Aorta (tissue), 5 donors: ENCODE measurements at regions of chr3 and their contacts with region 1.

Region 1: DNA sequence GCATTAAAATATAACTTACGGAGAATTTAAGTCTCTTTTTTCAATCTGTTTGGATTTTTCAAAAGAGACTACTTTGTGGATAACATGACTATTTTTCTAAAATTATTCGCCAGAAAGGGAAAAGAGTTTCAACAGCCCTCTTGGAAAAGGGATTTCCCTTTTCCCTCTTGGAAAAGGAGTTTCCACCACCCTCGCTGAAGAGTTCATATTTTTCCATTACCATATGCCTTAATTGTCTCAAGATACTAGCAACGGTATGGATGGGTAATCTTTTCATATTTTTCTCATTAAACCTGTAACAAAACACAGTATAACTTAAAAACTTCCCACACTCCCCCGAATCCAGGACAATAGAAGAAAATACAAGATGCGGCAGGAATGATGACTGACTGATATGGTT is 66.1 kb upstream of the SPATA12 start:
- DNase-seq: no peak
- ATAC-seq: no peak
- H3K4me3 ChIP-seq: no peak overlapping the region
- H3K27ac ChIP-seq: no peak overlapping the region
- H3K4me1 ChIP-seq: no peaks in the 10 kb centered on the region
- H3K27me3 ChIP-seq: no peaks in the 10 kb centered on the region

Region 2: GRCh38 chr3:56878074-56878473 is 116.3 kb before region 1 on chr3:
- intact Hi-C with region 1: no loop called
- DNase-seq: no peak
- ATAC-seq: no peak
- H3K4me3 ChIP-seq: no peak overlapping the region
- H3K27ac ChIP-seq: no peak overlapping the region
- H3K4me1 ChIP-seq: peaks cover 0 to 2% of the 10 kb centered on the region in 2 donors
- H3K27me3 ChIP-seq: no peaks in the 10 kb centered on the region

Region 3: DNA sequence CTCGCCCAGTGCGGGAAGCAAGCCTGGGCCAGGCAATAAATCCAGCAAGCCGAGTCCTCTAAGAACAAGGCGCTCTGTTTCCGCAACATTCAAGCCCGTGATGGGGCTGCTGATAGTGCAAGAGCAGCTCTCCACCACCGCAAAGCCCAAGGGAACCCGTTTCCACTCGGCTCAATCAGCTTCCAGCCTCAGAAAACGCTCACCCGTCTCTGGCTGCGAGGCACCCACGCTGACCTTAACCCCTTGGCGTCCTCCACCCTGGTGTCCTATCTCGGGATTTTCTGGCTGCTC is 83.9 kb after region 1 on chr3:
- intact Hi-C with region 1: loop called in 1 of 2 experiments (anchors 2 kb)
- DNase-seq: peak; percentile 76 to 83
- ATAC-seq: peak; percentile 43
- H3K4me3 ChIP-seq: peak overlapping the region; percentile 20 to 57
- H3K27ac ChIP-seq: no peak overlapping the region
- H3K4me1 ChIP-seq: no peaks in the 10 kb centered on the region
- H3K27me3 ChIP-seq: no peaks in the 10 kb centered on the region

Region 4: DNA sequence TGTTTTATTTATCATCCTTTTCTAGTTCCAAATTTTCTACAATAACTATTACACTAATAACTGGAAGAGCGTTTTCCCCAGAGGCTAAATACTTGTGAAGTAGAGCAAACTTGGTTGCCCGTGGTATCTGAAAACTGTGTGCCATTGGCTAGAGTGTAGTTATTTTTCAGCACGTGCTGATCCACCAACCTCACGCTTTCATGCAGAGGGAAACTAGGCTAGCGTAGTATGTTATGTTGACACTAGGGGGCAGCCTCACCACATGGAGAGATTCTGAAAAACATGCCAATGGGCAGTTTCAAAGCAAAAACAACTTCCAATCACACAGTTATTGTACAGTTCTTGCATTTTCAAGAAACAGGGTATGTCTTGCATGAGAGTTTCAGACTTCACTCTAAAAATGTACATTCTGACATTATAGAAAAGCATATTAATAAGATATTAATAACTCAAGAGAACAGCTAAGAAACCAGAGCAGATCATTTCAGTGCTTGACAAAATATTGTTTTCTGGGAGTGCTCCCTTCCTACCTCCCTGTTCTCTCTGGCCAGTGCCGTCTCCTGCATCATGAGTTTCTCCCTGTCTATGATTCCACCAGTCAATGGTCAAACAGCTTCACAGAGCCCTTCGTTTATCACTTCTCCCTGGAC is 105.8 kb after region 1 on chr3:
- intact Hi-C with region 1: no loop called
- DNase-seq: peak in 1 of 2 donors; percentile 64
- ATAC-seq: peak; percentile 88
- H3K4me3 ChIP-seq: no peak overlapping the region
- H3K27ac ChIP-seq: no peak overlapping the region
- H3K4me1 ChIP-seq: no peaks in the 10 kb centered on the region
- H3K27me3 ChIP-seq: no peaks in the 10 kb centered on the region